Natural killer cell (primary cell): ENCODE measurements at regions of chr1 and their contacts with region 1.

Region 1: GRCh38 chr1:205591522-205592351 is 40.1 kb downstream of the ELK4 start:
- DNase-seq: peak; percentile 88 to 93
- ATAC-seq: peak; percentile 92 to 96 (median 94)
- H3K4me3 ChIP-seq: peak overlapping the region; percentile 36
- H3K4me3 Mint-ChIP-seq: peak overlapping the region; percentile 79
- H3K27ac ChIP-seq: peak overlapping the region; percentile 43
- H3K27ac Mint-ChIP-seq: peak overlapping the region; percentile 68 to 85
- H3K4me1 ChIP-seq: peaks cover 27% of the 10 kb centered on the region
- H3K4me1 Mint-ChIP-seq: peaks cover 13% of the 10 kb centered on the region in 2 donors
- H3K27me3 ChIP-seq: no peaks in the 10 kb centered on the region
- H3K27me3 Mint-ChIP-seq: peaks cover 0 to 3% of the 10 kb centered on the region in 2 donors
- CTCF ChIP-seq: peak; percentile 95

Region 2: GRCh38 chr1:205658943-205659581 is 67.3 kb after region 1 on chr1:
- intact Hi-C with region 1: loop called (anchors 1 kb)
- DNase-seq: peak; percentile 62 to 84
- ATAC-seq: peak; percentile 86 to 97 (median 92)
- H3K4me3 ChIP-seq: no peak overlapping the region
- H3K4me3 Mint-ChIP-seq: no peak overlapping the region
- H3K27ac ChIP-seq: no peak overlapping the region
- H3K27ac Mint-ChIP-seq: no peak overlapping the region
- H3K4me1 ChIP-seq: no peaks in the 10 kb centered on the region
- H3K4me1 Mint-ChIP-seq: peaks cover 0 to 4% of the 10 kb centered on the region in 2 donors
- H3K27me3 ChIP-seq: no peaks in the 10 kb centered on the region
- H3K27me3 Mint-ChIP-seq: peaks cover 0 to 2% of the 10 kb centered on the region in 2 donors
- CTCF ChIP-seq: peak; percentile 70